ENCODE measurements at regions of chr1 and their contacts with region 1.

Region 1: DNA sequence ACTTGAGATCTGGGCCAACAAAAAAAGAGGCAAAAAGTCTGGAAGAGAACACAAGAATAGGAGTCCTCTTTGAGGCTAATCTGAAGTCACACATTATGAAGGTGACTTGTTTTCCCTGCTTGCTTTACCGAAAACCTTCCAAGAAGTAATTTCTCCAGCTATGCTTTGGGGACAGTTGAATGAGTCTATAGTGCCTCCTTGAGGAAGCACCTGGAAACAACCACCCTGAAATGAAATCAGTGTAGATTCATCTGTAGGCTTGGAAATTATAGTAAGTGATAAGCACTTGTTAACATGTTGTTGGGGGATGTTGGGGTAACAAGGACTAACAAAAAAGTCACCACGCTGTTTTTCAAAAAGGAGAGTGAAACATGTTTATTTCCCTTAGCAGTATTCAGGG is 23.4 kb upstream of the RPTN start:
- DNase-seq: no peak
- H3K4me3 ChIP-seq: no peak overlapping the region
- H3K27ac ChIP-seq: peak overlapping the region; percentile 68 to 83 (median 76)
- H3K4me1 ChIP-seq: peaks cover 7 to 71% (median 32%) of the 10 kb centered on the region in 3 donors
- H3K27me3 ChIP-seq: no peaks in the 10 kb centered on the region
- CTCF ChIP-seq: peak; percentile 23 to 86 (median 52)
- POLR2A ChIP-seq: no peak

Region 2: DNA sequence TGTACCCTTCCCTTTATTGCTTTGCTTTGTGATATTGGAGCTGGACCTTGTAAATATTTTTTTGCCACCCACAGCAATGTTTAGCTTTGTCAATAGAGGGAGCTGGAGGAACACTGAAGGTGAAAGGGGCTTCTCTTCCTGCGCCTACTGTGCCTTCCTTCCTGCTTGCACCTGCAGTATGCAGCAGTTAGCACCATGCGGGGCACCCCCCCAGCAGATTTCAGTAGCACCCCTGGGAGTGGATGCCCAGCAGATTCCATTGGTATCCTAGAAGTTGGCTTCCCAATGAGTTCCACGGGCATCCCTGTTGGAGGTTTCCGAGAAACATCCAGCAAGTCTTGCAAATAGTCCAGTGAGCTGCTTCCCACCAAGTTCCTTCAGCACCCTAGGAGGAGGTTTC is 214.4 kb before region 1 on chr1:
- intact Hi-C with region 1: no loop called
- DNase-seq: no peak
- H3K4me3 ChIP-seq: no peak overlapping the region
- H3K27ac ChIP-seq: no peak overlapping the region
- H3K4me1 ChIP-seq: peaks cover 8 to 77% (median 29%) of the 10 kb centered on the region in 3 donors
- H3K27me3 ChIP-seq: no peaks in the 10 kb centered on the region
- CTCF ChIP-seq: peak in 5 of 6 experiments; percentile 64 to 84 (median 74)
- POLR2A ChIP-seq: no peak

Region 3: GRCh38 chr1:152052606-152053005 is 129.8 kb before region 1 on chr1:
- intact Hi-C with region 1: loop called (anchors 5 kb)
- DNase-seq: peak; percentile 37
- H3K4me3 ChIP-seq: no peak overlapping the region
- H3K27ac ChIP-seq: peak overlapping the region in 3 of 4 donors; percentile 98 to 99 (median 99)
- H3K4me1 ChIP-seq: peaks cover 17 to 52% (median 36%) of the 10 kb centered on the region in 3 donors
- H3K27me3 ChIP-seq: peaks cover 0 to 25% (median 0%) of the 10 kb centered on the region in 4 donors
- CTCF ChIP-seq: peak; percentile 76 to 97 (median 93)
- POLR2A ChIP-seq: no peak

Region 4: GRCh38 chr1:152141974-152142584 is 40.4 kb before region 1 on chr1:
- intact Hi-C with region 1: loop called (anchors 5 kb)
- DNase-seq: no peak
- H3K4me3 ChIP-seq: no peak overlapping the region
- H3K27ac ChIP-seq: no peak overlapping the region
- H3K4me1 ChIP-seq: peaks cover 0 to 6% (median 0%) of the 10 kb centered on the region in 3 donors
- H3K27me3 ChIP-seq: peaks cover 0 to 15% (median 0%) of the 10 kb centered on the region in 4 donors
- CTCF ChIP-seq: peak; percentile 19 to 93 (median 90)
- POLR2A ChIP-seq: no peak

Region 5: DNA sequence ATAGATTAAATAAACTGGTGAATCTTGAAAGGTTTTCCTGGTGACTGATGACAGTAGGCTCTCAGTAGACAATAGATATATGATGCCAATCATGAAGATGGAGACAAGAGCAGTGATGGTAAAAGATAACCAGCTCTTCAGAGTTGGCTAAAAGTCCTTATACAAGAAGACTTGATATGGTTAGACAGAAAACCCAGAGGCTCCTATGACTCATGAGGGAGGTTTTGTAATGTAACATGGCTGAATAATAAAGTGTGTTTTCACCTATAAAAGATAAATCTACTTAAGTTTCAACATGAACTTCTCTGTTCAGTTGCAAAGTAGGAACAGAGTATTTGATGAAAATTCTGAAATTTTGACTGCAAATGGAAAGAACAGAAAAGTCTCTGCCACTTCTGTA is 244.3 kb after region 1 on chr1:
- intact Hi-C with region 1: no loop called
- DNase-seq: no peak
- H3K4me3 ChIP-seq: no peak overlapping the region
- H3K27ac ChIP-seq: peak overlapping the region in 3 of 4 donors; percentile 67 to 85 (median 79)
- H3K4me1 ChIP-seq: peaks cover 0 to 33% (median 5%) of the 10 kb centered on the region in 3 donors
- H3K27me3 ChIP-seq: no peaks in the 10 kb centered on the region
- CTCF ChIP-seq: no peak
- POLR2A ChIP-seq: no peak

Measured in esophagus squamous epithelium (tissue), 5 donors.